CD4-positive, alpha-beta T cell (primary cell): ENCODE measurements at regions of chr2 and their contacts with region 1.

Region 1: GRCh38 chr2:233430081-233430480 is 75.8 kb downstream of the DGKD start:
- DNase-seq: no peak
- ATAC-seq: no peak
- H3K4me3 ChIP-seq: no peak overlapping the region
- H3K4me3 Mint-ChIP-seq: no peak overlapping the region
- H3K27ac ChIP-seq: no peak overlapping the region
- H3K27ac Mint-ChIP-seq: peak overlapping the region; percentile 71
- H3K4me1 ChIP-seq: peaks cover 36% of the 10 kb centered on the region
- H3K4me1 Mint-ChIP-seq: peaks cover 79% of the 10 kb centered on the region
- H3K27me3 ChIP-seq: no peaks in the 10 kb centered on the region
- H3K27me3 Mint-ChIP-seq: no peaks in the 10 kb centered on the region
- CTCF ChIP-seq: no peak

Region 2: GRCh38 chr2:233418761-233419625 is 11.1 kb before region 1 on chr2:
- CTCF ChIA-PET with region 1: interaction called, 3 read pairs
- POLR2A ChIA-PET with region 1: interaction called, 55 read pairs
- intact Hi-C with region 1: no loop called
- DNase-seq: peak in 13 of 14 experiments; percentile 31 to 81 (median 63)
- ATAC-seq: peak; percentile 47
- H3K4me3 ChIP-seq: peak overlapping the region; percentile 56
- H3K4me3 Mint-ChIP-seq: peak overlapping the region; percentile 89
- H3K27ac ChIP-seq: peak overlapping the region; percentile 66 to 77
- H3K27ac Mint-ChIP-seq: peak overlapping the region; percentile 95
- H3K4me1 ChIP-seq: peaks cover 98% of the 10 kb centered on the region
- H3K4me1 Mint-ChIP-seq: peaks cover 98% of the 10 kb centered on the region
- H3K27me3 ChIP-seq: no peaks in the 10 kb centered on the region
- H3K27me3 Mint-ChIP-seq: no peaks in the 10 kb centered on the region
- CTCF ChIP-seq: no peak